Keratinocyte (primary cell): ENCODE measurements at regions of chr1 and their contacts with region 1.

Region 1: DNA sequence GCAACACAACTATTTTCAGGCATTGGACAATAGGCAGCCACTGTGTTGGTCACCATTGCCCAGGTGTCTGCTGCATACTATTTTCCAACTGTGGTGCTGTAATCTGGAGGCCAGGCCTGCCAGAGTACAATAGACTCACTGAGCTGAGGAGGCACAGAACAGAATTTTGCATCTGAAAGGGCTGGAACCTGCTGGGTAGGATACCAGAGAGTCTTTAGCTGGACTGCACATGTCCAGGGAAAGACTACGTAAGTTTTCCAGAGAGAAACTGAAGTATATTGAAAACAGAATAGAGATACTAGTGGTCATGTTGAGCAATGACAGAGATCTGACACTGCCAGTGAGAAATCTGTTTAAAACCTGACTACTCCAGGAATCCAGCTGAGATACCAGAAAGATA is 200.8 kb downstream of the RASAL2 start:
- DNase-seq: no peak
- H3K4me3 ChIP-seq: no peak overlapping the region
- H3K27ac ChIP-seq: peak overlapping the region; percentile 4
- H3K4me1 ChIP-seq: peaks cover 17% of the 10 kb centered on the region
- H3K27me3 ChIP-seq: no peaks in the 10 kb centered on the region
- CTCF ChIP-seq: peak in 2 of 3 experiments; percentile 17 to 24

Region 2: DNA sequence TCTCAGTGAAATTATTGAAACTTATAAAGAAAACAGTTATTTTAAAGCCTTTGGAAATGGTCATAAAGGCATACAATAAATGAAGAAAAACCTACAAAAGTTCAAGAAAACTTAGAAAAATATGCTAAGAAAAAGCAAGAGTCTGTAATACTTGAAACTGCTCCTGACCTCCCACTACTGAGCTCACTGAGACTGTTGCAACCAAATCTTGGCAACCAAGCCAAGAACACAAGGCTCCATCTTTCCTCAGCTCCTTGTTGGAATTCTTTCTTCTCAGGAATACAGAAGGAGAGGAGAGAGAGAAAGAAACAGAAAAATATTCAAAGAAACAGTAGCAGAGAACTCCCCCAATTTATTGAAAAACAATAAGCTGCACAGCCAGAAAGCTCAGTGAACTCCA is 40.2 kb before region 1 on chr1:
- dilution Hi-C with region 1: loop called (anchors 5 kb)
- DNase-seq: no peak
- H3K4me3 ChIP-seq: no peak overlapping the region
- H3K27ac ChIP-seq: no peak overlapping the region
- H3K4me1 ChIP-seq: peaks cover 5% of the 10 kb centered on the region
- H3K27me3 ChIP-seq: no peaks in the 10 kb centered on the region
- CTCF ChIP-seq: no peak

Region 3: GRCh38 chr1:179164494-179164893 is 869.8 kb after region 1 on chr1:
- dilution Hi-C with region 1: no loop called
- DNase-seq: peak; percentile 86
- H3K4me3 ChIP-seq: no peak overlapping the region
- H3K27ac ChIP-seq: peak overlapping the region; percentile 41
- H3K4me1 ChIP-seq: peaks cover 7% of the 10 kb centered on the region
- H3K27me3 ChIP-seq: no peaks in the 10 kb centered on the region
- CTCF ChIP-seq: no peak